Right ventricle myocardium inferior (tissue), 1 donor: ENCODE measurements at regions of chr11 and their contacts with region 1.

Region 1: DNA sequence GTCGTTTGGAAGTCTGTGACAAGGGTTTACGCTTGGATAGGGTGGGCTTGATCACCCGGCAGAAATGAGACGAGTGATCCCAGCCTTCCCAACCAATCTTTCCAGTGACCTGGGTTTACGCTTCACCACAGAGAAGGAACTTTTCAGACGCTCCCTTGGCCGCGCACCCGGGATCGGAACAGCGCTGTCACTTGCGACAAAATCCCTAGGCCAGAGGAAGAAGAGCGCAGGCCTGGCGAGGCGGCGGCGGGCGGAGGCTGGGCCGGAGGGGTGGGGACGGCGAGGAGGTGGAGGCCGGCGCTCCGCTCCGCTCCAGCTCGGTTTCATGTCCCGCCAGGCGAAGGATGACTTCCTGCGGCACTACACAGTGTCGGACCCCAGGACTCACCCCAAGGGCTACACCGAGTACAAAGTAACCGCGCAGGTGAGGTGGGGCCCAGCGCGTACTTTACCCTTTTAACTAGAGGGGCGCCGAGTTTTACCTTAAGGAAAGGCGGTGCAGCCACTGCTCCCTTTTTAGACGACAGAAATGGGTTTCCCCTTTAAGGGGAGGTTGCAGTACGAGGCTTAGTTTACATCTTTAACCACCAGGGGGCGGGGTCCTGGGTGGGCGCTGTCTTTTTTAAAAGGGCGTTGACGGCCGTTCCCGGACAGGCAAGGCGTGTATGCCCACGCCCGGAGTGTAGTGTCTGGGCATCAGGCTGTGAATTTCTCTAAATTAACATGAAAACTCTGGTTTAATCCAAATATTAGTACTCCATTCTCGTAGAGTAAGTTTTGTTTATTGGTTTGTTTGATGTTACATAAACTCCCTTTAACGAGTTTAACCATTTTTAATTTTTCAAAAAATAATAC is at the start of gene SNX15:
- DNase-seq: peak; percentile 95
- ATAC-seq: peak; percentile 98
- total RNA-seq, gene SNX15: 18.3 TPM

Region 2: DNA sequence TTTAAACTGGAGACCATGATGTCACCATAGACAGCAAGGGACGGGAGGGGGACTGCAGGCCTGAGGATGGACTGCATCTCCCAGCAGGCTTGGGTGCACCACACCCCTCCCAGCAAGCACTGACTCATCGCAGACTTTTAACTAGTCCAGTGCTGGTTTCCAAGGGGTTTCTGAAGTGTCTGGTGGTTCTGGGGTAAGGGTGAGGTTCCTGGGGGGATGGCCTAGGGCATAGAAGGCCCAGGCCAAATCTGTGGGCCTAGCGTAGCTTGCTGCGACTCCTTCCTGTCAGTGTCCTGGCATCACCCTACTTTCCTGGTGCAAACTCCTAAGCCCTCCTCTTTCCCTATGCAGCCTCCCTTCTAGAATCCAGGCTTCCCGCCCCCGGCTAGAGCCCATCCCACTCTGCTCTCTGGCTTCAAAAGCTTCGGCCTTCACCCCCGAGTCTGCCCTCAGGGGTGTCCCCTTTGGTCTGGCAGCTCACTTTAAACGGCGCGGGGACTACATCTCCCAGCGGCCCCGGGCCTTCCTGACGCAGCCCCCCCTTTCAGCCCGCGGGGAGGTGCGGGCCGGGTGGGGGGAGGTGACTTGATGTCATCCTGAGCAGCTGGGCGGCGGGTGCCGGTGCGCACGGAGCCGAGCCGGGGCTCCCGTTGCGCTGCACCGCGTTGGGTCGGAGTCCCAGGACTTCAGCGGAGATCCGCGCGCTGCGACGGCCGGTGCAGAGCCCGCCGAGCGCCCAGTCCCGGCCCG is 103.2 kb before region 1 on chr11 and contains the start of gene PPP2R5B:
- intact Hi-C with region 1: loop called (anchors 5 kb)
- DNase-seq: peak; percentile 97
- ATAC-seq: peak; percentile 97
- total RNA-seq, gene PPP2R5B: 20.6 TPM

Region 3: GRCh38 chr11:65040847-65041621 is 13.6 kb after region 1 on chr11 and contains the start of gene SAC3D1:
- intact Hi-C with region 1: loop called (anchors 2 kb)
- DNase-seq: peak; percentile 95
- ATAC-seq: peak; percentile 95
- total RNA-seq, gene SAC3D1: 7.5 TPM

Region 4: DNA sequence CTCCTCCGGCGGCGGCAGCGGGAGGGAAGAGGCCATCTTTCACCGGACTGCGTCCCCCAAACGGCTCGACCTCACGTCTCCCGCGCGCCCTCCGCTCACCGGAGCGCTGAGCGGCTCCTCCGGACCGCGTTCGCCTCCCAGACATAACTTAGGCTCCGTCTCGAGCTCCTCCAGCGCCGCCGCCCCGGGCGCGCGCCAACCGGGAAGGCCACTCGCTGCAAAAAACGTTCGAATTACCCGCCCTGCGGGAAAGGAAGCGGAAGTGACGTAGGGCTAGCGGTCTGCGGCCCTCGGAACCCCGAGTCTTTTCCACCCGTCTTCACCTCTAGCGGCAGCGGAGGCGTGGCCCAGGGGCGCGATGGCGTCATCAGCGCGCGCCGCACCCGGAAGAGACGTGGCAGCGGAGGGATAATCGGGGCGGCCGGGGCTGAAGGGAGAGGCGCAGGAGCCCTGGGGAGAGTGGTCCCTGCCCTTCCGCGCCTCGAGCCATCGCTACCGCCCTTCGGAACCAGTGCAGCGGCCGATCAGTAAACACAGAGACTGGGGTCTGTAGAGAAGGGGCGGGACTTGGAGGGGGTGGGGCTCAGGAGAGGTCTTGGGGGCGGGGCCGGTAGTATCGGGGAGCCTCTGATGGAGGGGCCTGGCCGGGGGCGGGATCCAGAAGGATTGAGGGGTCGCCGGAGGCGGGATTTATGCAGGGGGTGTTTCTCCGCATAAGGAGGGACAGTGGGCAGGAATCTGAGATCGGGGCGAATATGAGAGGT is 56.6 kb after region 1 on chr11 and contains the starts of genes CDCA5 and ZFPL1:
- intact Hi-C with region 1: loop called (anchors 5 kb)
- DNase-seq: peak; percentile 96
- ATAC-seq: peak; percentile 95
- total RNA-seq, gene CDCA5: 1.7 TPM
- total RNA-seq, gene ZFPL1: 25.0 TPM

Region 5: GRCh38 chr11:65927904-65928397 is 900.5 kb after region 1 on chr11:
- intact Hi-C with region 1: no loop called
- DNase-seq: no peak
- ATAC-seq: no peak